ENCODE measurements at regions of chr15 and their contacts with region 1.

Region 1: DNA sequence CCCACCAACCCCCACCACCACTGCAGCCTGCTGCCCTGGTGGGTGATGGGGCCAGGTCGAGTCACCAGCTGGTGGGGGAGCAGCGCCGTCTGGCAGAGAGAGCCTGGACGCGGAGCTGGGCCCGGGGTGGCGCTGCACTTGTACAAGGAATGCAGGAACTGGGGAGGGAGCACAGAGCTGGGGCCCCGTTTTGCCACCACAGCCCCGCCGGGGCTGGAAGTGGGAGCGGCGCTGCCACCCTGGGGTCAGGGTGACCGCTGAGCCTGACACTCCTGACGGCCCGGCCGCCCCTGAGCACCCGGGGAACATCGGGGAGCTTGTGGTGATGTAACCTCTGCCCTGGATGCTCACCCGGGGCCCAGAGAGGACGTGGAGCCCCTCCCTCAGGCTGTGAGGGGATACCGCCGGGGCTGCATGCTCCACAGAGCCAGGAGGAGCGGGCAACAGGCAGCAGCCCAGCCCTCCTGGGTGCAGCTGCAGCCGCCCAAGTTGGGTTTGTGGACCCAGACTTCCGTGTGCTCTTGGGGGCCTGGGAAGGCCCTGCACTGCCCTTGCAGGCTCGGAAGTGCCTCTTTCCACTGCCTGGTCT is 32.6 kb upstream of the IREB2 start:
- DNase-seq: no peak
- H3K4me3 ChIP-seq: no peak overlapping the region
- H3K27ac ChIP-seq: no peak overlapping the region
- H3K4me1 ChIP-seq: no peaks in the 10 kb centered on the region
- H3K27me3 ChIP-seq: peaks cover 0 to 18% (median 0%) of the 10 kb centered on the region in 3 donors
- CTCF ChIP-seq: no peak
- EP300 ChIP-seq: no peak
- POLR2A ChIP-seq: no peak

Region 2: GRCh38 chr15:78422571-78423340 is 17.3 kb after region 1 on chr15:
- intact Hi-C with region 1: loop called (anchors 1 kb)
- DNase-seq: peak; percentile 81
- H3K4me3 ChIP-seq: no peak overlapping the region
- H3K27ac ChIP-seq: no peak overlapping the region
- H3K4me1 ChIP-seq: peaks cover 0 to 4% (median 0%) of the 10 kb centered on the region in 4 donors
- H3K27me3 ChIP-seq: no peaks in the 10 kb centered on the region
- CTCF ChIP-seq: peak; percentile 83 to 92 (median 90)
- EP300 ChIP-seq: no peak
- POLR2A ChIP-seq: no peak

Measured in sigmoid colon (tissue), 7 donors.